Endothelial cell of umbilical vein (primary cell): ENCODE measurements at regions of chrX and their contacts with region 1.

Region 1: GRCh38 chrX:50147972-50148371 is 52.8 kb downstream of the AKAP4 start:
- DNase-seq: no peak
- H3K4me3 ChIP-seq: no peak overlapping the region
- H3K27ac ChIP-seq: no peak overlapping the region
- H3K4me1 ChIP-seq: no peaks in the 10 kb centered on the region
- H3K27me3 ChIP-seq: no peaks in the 10 kb centered on the region
- CTCF ChIP-seq: no peak
- POLR2A ChIP-seq: no peak

Region 2: DNA sequence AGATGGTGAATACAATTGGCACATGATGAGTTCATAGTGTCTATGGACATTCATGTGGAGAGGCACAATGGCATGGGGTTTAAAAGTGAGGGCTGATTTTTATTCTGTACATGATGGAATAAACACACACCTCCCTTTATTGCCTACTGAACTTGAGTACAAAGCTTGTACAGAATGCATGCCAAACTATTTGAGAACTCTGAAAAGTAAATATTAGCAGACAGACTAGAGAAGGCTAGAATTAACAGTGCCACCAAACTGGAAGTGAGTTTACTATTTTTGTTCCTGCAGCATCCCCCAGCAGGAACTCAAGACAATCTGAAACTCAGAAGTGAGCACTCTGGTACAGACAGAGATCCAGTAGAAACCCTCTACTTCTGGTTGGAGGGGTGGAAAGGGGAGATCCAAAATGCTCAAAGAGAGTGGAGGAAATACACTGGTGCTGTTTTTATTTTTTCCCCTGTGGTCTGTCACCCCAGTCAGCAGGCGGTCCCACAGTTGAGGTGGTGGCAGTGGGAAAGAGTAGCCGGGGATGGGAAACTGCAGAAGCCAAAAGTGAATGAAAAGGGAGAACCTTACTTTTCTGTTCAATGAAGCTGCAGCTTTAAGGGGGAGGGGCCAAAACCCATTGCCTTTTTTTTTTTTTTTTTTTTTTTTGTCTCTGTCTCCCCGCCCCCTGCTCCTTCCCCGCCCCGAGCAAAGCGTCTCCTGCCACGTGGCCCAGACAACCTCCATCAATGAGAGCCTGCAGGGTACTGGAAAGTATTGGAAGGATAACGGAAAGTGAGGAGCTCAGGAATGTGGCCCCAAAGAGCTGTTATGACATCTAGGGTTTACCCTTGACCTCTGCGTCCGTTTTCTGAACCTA is 32.3 kb after region 1 on chrX:
- CTCF ChIA-PET with region 1: no interaction called
- POLR2A ChIA-PET with region 1: no interaction called
- dilution Hi-C with region 1: no loop called
- intact Hi-C with region 1: loop called (anchors 5 kb)
- DNase-seq: no peak
- H3K4me3 ChIP-seq: no peak overlapping the region
- H3K27ac ChIP-seq: no peak overlapping the region
- H3K4me1 ChIP-seq: peaks cover 4% of the 10 kb centered on the region
- H3K27me3 ChIP-seq: no peaks in the 10 kb centered on the region
- CTCF ChIP-seq: no peak
- POLR2A ChIP-seq: no peak